CD8-positive, alpha-beta T cell (primary cell): ENCODE measurements at regions of chr17 and their contacts with region 1.

Region 1: GRCh38 chr17:38428112-38428642 is at the start of gene ARHGAP23:
- DNase-seq: peak in 6 of 9 experiments; percentile 16 to 58 (median 34)
- ATAC-seq: peak; percentile 68
- H3K4me3 ChIP-seq: peak within 1 kb of the TSS; percentile 37 to 52
- H3K4me3 Mint-ChIP-seq: peak within 1 kb of the TSS; percentile 80
- H3K27ac ChIP-seq: no peak within 1 kb of the TSS
- H3K27ac Mint-ChIP-seq: no peak within 1 kb of the TSS
- H3K4me1 ChIP-seq: peaks cover 9% of the 10 kb centered on the region
- H3K4me1 Mint-ChIP-seq: peaks cover 17% of the 10 kb centered on the region
- H3K27me3 ChIP-seq: peaks cover 5 to 17% of the 10 kb centered on the region in 2 experiments
- H3K27me3 Mint-ChIP-seq: peaks cover 17% of the 10 kb centered on the region
- CTCF ChIP-seq: no peak
- total RNA-seq, gene ARHGAP23: 0.30 to 0.33 TPM

Region 2: DNA sequence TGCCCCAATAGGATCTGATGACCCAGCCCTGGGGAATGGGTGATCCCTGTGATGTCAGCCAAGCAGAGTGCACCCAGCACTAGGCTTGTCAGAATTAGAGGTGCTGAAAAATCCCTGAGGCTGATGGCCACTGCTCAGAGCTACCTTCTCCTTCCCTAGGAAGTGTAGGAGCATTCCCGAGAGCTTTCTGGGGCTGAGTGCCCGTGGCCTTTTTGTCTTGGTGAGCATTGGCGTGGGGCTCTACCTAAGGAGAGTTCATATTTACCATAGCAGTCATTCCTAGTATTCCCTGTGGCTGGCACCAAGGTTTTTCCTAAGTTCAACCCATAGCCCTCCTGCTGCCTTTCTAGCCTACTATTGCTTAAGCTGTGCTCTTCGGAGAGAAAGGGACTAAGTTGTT is 22.5 kb before region 1 on chr17:
- CTCF ChIA-PET with region 1: no interaction called
- POLR2A ChIA-PET with region 1: no interaction called
- intact Hi-C with region 1: no loop called
- DNase-seq: no peak
- ATAC-seq: no peak
- H3K4me3 ChIP-seq: no peak overlapping the region
- H3K4me3 Mint-ChIP-seq: no peak overlapping the region
- H3K27ac ChIP-seq: no peak overlapping the region
- H3K27ac Mint-ChIP-seq: no peak overlapping the region
- H3K4me1 ChIP-seq: no peaks in the 10 kb centered on the region
- H3K4me1 Mint-ChIP-seq: no peaks in the 10 kb centered on the region
- H3K27me3 ChIP-seq: no peaks in the 10 kb centered on the region
- H3K27me3 Mint-ChIP-seq: peaks cover 4% of the 10 kb centered on the region
- CTCF ChIP-seq: no peak

Region 3: GRCh38 chr17:38444151-38444550 is 16.0 kb after region 1 on chr17:
- CTCF ChIA-PET with region 1: interaction called, 11 read pairs
- POLR2A ChIA-PET with region 1: no interaction called
- intact Hi-C with region 1: no loop called
- DNase-seq: peak; percentile 11 to 67 (median 54)
- ATAC-seq: peak; percentile 93
- H3K4me3 ChIP-seq: no peak overlapping the region
- H3K4me3 Mint-ChIP-seq: no peak overlapping the region
- H3K27ac ChIP-seq: no peak overlapping the region
- H3K27ac Mint-ChIP-seq: no peak overlapping the region
- H3K4me1 ChIP-seq: peaks cover 7% of the 10 kb centered on the region
- H3K4me1 Mint-ChIP-seq: peaks cover 6% of the 10 kb centered on the region
- H3K27me3 ChIP-seq: no peaks in the 10 kb centered on the region
- H3K27me3 Mint-ChIP-seq: peaks cover 2% of the 10 kb centered on the region
- CTCF ChIP-seq: peak; percentile 67

Region 4: GRCh38 chr17:38485146-38485468 is 56.9 kb after region 1 on chr17:
- CTCF ChIA-PET with region 1: interaction called, 3 read pairs
- POLR2A ChIA-PET with region 1: no interaction called
- intact Hi-C with region 1: loop called in 1 of 2 experiments (anchors 1 kb)
- DNase-seq: no peak
- ATAC-seq: no peak
- H3K4me3 ChIP-seq: no peak overlapping the region
- H3K4me3 Mint-ChIP-seq: no peak overlapping the region
- H3K27ac ChIP-seq: no peak overlapping the region
- H3K27ac Mint-ChIP-seq: no peak overlapping the region
- H3K4me1 ChIP-seq: no peaks in the 10 kb centered on the region
- H3K4me1 Mint-ChIP-seq: peaks cover 6% of the 10 kb centered on the region
- H3K27me3 ChIP-seq: no peaks in the 10 kb centered on the region
- H3K27me3 Mint-ChIP-seq: peaks cover 7% of the 10 kb centered on the region
- CTCF ChIP-seq: no peak

Region 5: DNA sequence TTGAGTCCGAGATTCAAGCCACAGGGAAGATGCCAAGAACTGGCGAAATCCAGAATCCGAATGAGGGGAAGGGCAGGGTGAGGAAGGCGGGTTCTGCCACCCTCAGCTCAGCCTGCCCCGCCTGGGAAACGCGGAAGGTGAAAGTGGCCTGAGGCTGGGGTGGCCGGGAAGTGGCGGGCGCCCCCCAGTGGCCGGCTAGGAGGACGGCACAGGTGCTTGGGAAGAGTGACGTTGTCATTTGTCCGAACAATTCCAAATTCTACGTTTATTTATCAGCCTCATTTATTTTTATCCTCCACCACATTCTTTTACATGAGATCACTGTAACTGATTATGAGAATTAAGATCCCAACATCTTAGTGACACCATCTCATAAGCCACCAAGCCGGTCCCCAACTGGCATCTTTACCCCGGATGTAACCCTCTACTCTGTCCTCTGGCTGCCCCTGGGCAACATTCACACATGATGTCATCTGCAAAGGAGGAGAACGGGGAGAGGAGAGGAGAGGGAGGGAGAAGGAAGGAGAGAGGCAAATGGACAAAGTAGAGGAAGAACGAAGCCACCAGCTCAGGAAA is 156.3 kb after region 1 on chr17:
- CTCF ChIA-PET with region 1: no interaction called
- POLR2A ChIA-PET with region 1: no interaction called
- intact Hi-C with region 1: loop called in 1 of 2 experiments (anchors 1 kb)
- DNase-seq: peak in 8 of 9 experiments; percentile 30 to 78 (median 63)
- ATAC-seq: peak; percentile 87
- H3K4me3 ChIP-seq: no peak overlapping the region
- H3K4me3 Mint-ChIP-seq: no peak overlapping the region
- H3K27ac ChIP-seq: no peak overlapping the region
- H3K27ac Mint-ChIP-seq: no peak overlapping the region
- H3K4me1 ChIP-seq: no peaks in the 10 kb centered on the region
- H3K4me1 Mint-ChIP-seq: peaks cover 3% of the 10 kb centered on the region
- H3K27me3 ChIP-seq: peaks cover 0 to 23% of the 10 kb centered on the region in 2 experiments
- H3K27me3 Mint-ChIP-seq: peaks cover 57% of the 10 kb centered on the region
- CTCF ChIP-seq: peak; percentile 89